ENCODE measurements at regions of chr4 and their contacts with region 1.

Region 1: GRCh38 chr4:2441393-2442174 is 22.8 kb downstream of the CFAP99 start:
- DNase-seq: peak; percentile 88 to 89 (median 89)
- H3K4me3 ChIP-seq: no peak overlapping the region
- H3K27ac ChIP-seq: no peak overlapping the region
- H3K4me1 ChIP-seq: peaks cover 0 to 16% (median 13%) of the 10 kb centered on the region in 4 experiments
- H3K27me3 ChIP-seq: no peaks in the 10 kb centered on the region

Region 2: DNA sequence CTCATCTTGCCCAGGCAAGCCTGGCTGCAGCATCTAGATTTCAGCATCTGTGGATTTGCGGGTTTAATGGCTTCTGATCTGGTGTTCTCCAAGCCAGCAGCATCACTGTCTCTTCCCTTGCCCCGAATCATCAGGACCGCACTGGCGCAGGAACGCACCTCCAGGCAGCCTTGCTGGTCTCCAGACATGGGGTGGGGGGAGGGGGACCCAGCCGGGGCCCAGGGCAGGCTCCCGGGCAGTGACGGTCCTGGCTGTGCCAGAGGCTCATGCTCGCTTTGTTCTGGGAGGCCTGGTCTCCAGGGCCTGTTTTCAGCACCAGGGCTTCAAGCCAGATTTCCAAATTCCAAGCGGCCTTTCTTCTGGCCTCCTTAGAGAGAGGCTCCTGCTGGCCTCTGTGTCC is 17.9 kb before region 1 on chr4:
- CTCF ChIA-PET with region 1: interaction called, 13 read pairs
- POLR2A ChIA-PET with region 1: no interaction called
- DNase-seq: no peak
- H3K4me3 ChIP-seq: no peak overlapping the region
- H3K27ac ChIP-seq: no peak overlapping the region
- H3K4me1 ChIP-seq: peaks cover 0 to 10% (median 9%) of the 10 kb centered on the region in 4 experiments
- H3K27me3 ChIP-seq: peaks cover 8 to 27% (median 21%) of the 10 kb centered on the region in 5 experiments

Region 3: DNA sequence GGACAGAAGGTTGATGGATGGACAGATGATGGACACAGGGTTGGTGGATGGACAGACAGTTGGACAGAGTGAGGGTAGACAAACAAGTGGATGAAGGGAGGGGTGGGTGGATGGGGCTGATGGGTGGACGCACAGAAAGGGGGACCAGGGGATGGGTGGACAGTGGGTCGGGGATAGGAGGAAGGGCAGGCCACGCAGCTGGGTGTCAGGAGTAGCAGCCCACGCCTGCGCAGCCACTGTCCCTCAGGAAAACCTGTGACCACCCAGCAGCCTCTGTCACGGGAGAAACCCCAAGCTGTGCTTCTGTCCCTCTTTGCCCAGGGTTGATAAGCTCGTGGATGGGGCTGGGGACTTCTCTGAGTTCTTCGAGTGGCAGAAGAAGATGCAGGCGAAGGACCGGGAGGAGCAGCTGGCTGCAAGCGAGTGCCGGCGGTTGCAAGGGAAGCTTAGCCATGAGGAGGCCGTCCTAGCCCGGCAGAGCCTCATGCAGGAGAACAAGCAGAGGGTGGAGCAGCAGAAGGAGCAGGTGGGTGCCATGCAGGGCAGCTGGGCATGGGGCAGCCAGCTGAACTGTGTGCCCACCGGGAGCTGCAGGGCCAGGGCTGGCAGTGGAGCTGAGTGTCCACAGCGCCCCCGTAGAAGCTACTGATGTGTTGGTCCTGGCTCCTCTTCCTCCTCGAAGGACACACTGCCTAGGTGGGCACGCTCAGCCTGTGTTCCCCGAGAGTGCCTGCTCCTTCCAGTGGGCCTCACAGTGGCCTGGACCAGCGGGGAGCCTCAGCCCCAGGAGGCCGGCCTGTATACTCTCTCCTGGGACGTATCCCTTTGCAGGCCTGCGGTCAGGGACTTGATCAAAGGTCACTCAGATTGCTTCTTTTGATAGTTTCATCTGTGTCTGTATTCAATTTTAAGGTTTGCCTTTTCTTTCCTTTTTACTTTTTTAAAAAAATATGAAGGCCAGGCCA is 10.5 kb after region 1 on chr4:
- CTCF ChIA-PET with region 1: interaction called, 11 read pairs
- POLR2A ChIA-PET with region 1: no interaction called
- DNase-seq: no peak
- H3K4me3 ChIP-seq: no peak overlapping the region
- H3K27ac ChIP-seq: no peak overlapping the region
- H3K4me1 ChIP-seq: no peaks in the 10 kb centered on the region
- H3K27me3 ChIP-seq: no peaks in the 10 kb centered on the region

Region 4: GRCh38 chr4:2462218-2462991 is 20.8 kb after region 1 on chr4:
- CTCF ChIA-PET with region 1: interaction called, 26 read pairs
- POLR2A ChIA-PET with region 1: no interaction called
- DNase-seq: peak; percentile 75 to 82 (median 78)
- H3K4me3 ChIP-seq: peak overlapping the region in 5 of 7 experiments; percentile 5 to 67 (median 59)
- H3K27ac ChIP-seq: no peak overlapping the region
- H3K4me1 ChIP-seq: peaks cover 0 to 13% (median 12%) of the 10 kb centered on the region in 4 experiments
- H3K27me3 ChIP-seq: peaks cover 0 to 10% (median 7%) of the 10 kb centered on the region in 5 experiments

Region 5: DNA sequence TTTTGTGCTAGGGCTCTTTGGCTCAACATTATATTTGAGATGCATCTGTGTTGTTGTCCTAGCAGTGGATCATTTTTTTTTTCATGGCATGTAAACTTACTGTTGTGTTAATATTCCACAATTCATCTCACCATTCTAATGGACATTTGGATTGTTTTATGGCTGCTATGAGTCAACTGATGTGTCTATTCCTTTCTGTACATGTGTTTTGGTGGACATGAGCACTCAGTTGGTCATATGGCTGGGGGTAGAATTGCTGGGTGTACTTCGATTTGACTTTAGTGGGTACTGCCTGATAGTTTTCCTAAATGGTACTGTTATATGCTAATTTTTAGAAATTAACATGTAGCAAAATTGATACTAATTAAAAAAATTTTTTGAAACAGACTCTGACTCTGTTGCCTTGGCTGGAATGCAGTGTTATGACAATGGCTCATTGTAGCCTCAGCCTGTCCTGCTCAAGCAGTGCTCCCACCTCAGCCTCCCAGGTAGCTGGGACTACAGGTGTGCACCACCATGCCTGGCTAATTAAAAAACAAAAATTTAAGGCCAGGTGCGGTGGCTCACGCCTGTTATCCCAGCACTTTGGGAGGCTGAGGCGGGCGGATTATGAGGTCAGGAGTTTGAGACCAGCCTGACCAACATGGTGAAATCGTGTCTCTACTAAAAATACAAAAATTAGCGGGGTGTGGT is 103.9 kb after region 1 on chr4:
- CTCF ChIA-PET with region 1: no interaction called
- POLR2A ChIA-PET with region 1: no interaction called
- DNase-seq: no peak
- H3K4me3 ChIP-seq: no peak overlapping the region
- H3K27ac ChIP-seq: no peak overlapping the region
- H3K4me1 ChIP-seq: no peaks in the 10 kb centered on the region
- H3K27me3 ChIP-seq: no peaks in the 10 kb centered on the region